B cell (primary cell): ENCODE measurements at regions of chr11 and their contacts with region 1.

Region 1: DNA sequence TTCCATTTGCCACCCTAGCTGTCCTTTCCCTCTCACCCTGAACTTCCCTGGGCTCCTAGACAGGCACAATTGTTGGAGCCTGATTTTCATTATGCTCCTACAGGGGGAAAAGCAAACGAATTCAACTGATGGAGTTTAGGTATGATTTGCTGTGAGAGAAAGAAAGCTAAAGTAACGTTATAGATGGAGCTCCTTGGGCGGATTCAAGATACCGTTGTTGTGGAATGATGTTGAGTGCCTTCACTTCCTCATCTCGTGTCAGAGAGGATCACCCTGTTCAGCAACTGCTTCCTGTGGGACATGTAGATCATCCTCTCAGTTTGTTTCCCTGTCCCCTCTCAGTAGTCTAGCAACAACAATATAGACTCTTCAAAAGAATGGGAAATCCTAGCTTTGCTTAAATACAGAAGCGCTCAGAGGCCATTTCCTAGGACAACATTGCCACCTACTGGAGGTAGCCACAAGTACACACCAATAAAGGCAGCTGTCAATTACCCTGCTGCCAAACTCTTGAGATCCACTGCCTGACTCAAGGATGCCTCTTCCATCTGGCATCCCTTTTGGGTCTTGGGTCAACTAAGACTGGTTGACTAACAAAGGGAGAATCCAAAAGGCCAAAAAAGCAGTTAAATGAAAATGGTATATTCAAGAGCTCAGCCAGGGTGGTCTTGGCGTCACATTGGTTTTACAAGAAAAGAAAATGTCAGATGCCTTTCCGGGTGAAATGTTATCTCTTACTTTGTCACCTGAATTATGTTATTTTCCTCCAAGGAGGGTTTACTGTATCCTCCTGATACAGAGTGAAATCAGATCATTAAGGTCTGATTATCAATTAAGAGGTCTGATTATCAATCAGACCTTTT is 13.5 kb upstream of the DTX4 start:
- DNase-seq: peak; percentile 86
- ATAC-seq: peak; percentile 97
- H3K4me3 ChIP-seq: no peak overlapping the region
- H3K4me3 Mint-ChIP-seq: peak overlapping the region; percentile 75
- H3K27ac ChIP-seq: no peak overlapping the region
- H3K27ac Mint-ChIP-seq: peak overlapping the region; percentile 73
- H3K4me1 ChIP-seq: peaks cover 11 to 14% of the 10 kb centered on the region in 2 donors
- H3K4me1 Mint-ChIP-seq: peaks cover 19% of the 10 kb centered on the region
- H3K27me3 ChIP-seq: no peaks in the 10 kb centered on the region
- H3K27me3 Mint-ChIP-seq: no peaks in the 10 kb centered on the region
- CTCF ChIP-seq: peak; percentile 94

Region 2: GRCh38 chr11:58567889-58568512 is 590.4 kb before region 1 on chr11:
- CTCF ChIA-PET with region 1: interaction called, 32 read pairs
- POLR2A ChIA-PET with region 1: no interaction called
- intact Hi-C with region 1: loop called (anchors 1 kb)
- DNase-seq: peak; percentile 87
- ATAC-seq: peak; percentile 98
- H3K4me3 ChIP-seq: no peak overlapping the region
- H3K4me3 Mint-ChIP-seq: peak overlapping the region; percentile 1
- H3K27ac ChIP-seq: no peak overlapping the region
- H3K27ac Mint-ChIP-seq: peak overlapping the region; percentile 5
- H3K4me1 ChIP-seq: peaks cover 19 to 21% of the 10 kb centered on the region in 2 donors
- H3K4me1 Mint-ChIP-seq: peaks cover 42% of the 10 kb centered on the region
- H3K27me3 ChIP-seq: no peaks in the 10 kb centered on the region
- H3K27me3 Mint-ChIP-seq: no peaks in the 10 kb centered on the region
- CTCF ChIP-seq: peak; percentile 82

Region 3: GRCh38 chr11:58647141-58647699 is 511.2 kb before region 1 on chr11:
- CTCF ChIA-PET with region 1: interaction called, 99 read pairs
- POLR2A ChIA-PET with region 1: no interaction called
- intact Hi-C with region 1: no loop called
- DNase-seq: peak; percentile 49
- ATAC-seq: peak; percentile 93
- H3K4me3 ChIP-seq: no peak overlapping the region
- H3K4me3 Mint-ChIP-seq: peak overlapping the region; percentile 14
- H3K27ac ChIP-seq: no peak overlapping the region
- H3K27ac Mint-ChIP-seq: peak overlapping the region; percentile 76
- H3K4me1 ChIP-seq: peaks cover 5 to 12% of the 10 kb centered on the region in 2 donors
- H3K4me1 Mint-ChIP-seq: peaks cover 20% of the 10 kb centered on the region
- H3K27me3 ChIP-seq: no peaks in the 10 kb centered on the region
- H3K27me3 Mint-ChIP-seq: peaks cover 6% of the 10 kb centered on the region
- CTCF ChIP-seq: no peak

Region 4: GRCh38 chr11:58675334-58676155 is 482.9 kb before region 1 on chr11:
- CTCF ChIA-PET with region 1: interaction called, 25 read pairs
- POLR2A ChIA-PET with region 1: no interaction called
- intact Hi-C with region 1: no loop called
- DNase-seq: peak; percentile 74
- ATAC-seq: peak; percentile 73
- H3K4me3 ChIP-seq: no peak overlapping the region
- H3K4me3 Mint-ChIP-seq: no peak overlapping the region
- H3K27ac ChIP-seq: no peak overlapping the region
- H3K27ac Mint-ChIP-seq: no peak overlapping the region
- H3K4me1 ChIP-seq: no peaks in the 10 kb centered on the region
- H3K4me1 Mint-ChIP-seq: no peaks in the 10 kb centered on the region
- H3K27me3 ChIP-seq: peaks cover 0 to 16% (median 4%) of the 10 kb centered on the region in 4 experiments
- H3K27me3 Mint-ChIP-seq: peaks cover 12% of the 10 kb centered on the region
- CTCF ChIP-seq: peak; percentile 96

Region 5: GRCh38 chr11:59135648-59136461 is 22.6 kb before region 1 on chr11:
- CTCF ChIA-PET with region 1: interaction called, 94 read pairs
- POLR2A ChIA-PET with region 1: no interaction called
- intact Hi-C with region 1: no loop called
- DNase-seq: peak; percentile 90
- ATAC-seq: peak; percentile 99
- H3K4me3 ChIP-seq: peak overlapping the region in 1 of 5 experiments; percentile 18
- H3K4me3 Mint-ChIP-seq: peak overlapping the region; percentile 62
- H3K27ac ChIP-seq: no peak overlapping the region
- H3K27ac Mint-ChIP-seq: peak overlapping the region; percentile 88
- H3K4me1 ChIP-seq: peaks cover 14 to 23% of the 10 kb centered on the region in 2 donors
- H3K4me1 Mint-ChIP-seq: peaks cover 31% of the 10 kb centered on the region
- H3K27me3 ChIP-seq: no peaks in the 10 kb centered on the region
- H3K27me3 Mint-ChIP-seq: no peaks in the 10 kb centered on the region
- CTCF ChIP-seq: peak; percentile 98

Region 6: GRCh38 chr11:59429924-59430516 is 271.6 kb after region 1 on chr11:
- CTCF ChIA-PET with region 1: interaction called, 21 read pairs
- POLR2A ChIA-PET with region 1: no interaction called
- intact Hi-C with region 1: no loop called
- DNase-seq: peak; percentile 86
- ATAC-seq: peak; percentile 87
- H3K4me3 ChIP-seq: no peak overlapping the region
- H3K4me3 Mint-ChIP-seq: no peak overlapping the region
- H3K27ac ChIP-seq: no peak overlapping the region
- H3K27ac Mint-ChIP-seq: no peak overlapping the region
- H3K4me1 ChIP-seq: no peaks in the 10 kb centered on the region
- H3K4me1 Mint-ChIP-seq: no peaks in the 10 kb centered on the region
- H3K27me3 ChIP-seq: no peaks in the 10 kb centered on the region
- H3K27me3 Mint-ChIP-seq: peaks cover 12% of the 10 kb centered on the region
- CTCF ChIP-seq: peak; percentile 93